Dorsolateral prefrontal cortex (tissue), 120 donors: ENCODE measurements at regions of chr2 and their contacts with region 1.

Region 1: DNA sequence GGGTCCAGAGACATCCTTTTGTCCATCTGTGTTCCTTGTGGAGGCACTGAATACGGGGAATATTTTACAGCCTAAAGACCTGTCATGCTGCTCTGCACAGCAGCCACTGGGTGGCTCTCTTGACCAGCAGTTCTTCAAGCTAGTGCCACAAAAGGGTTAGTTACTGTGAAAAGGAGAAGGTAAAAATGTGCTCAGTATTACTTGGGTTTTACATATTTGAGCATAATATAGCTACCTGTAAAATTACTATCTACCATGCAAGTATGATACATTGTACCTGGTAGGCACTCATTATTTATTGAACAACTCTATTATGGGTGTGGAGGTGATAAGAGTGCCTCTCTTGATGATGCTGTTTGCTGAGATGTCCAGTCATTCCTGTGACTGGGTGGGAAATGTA is 23.6 kb downstream of the FZD5 start:
- DNase-seq: peak in 9 of 10 donors; percentile 43 to 78 (median 68)
- H3K4me3 ChIP-seq: no peak overlapping the region
- H3K27ac ChIP-seq: no peak overlapping the region
- H3K27me3 ChIP-seq: no peaks in the 10 kb centered on the region
- CTCF ChIP-seq: peak; percentile 54 to 99 (median 92)

Region 2: DNA sequence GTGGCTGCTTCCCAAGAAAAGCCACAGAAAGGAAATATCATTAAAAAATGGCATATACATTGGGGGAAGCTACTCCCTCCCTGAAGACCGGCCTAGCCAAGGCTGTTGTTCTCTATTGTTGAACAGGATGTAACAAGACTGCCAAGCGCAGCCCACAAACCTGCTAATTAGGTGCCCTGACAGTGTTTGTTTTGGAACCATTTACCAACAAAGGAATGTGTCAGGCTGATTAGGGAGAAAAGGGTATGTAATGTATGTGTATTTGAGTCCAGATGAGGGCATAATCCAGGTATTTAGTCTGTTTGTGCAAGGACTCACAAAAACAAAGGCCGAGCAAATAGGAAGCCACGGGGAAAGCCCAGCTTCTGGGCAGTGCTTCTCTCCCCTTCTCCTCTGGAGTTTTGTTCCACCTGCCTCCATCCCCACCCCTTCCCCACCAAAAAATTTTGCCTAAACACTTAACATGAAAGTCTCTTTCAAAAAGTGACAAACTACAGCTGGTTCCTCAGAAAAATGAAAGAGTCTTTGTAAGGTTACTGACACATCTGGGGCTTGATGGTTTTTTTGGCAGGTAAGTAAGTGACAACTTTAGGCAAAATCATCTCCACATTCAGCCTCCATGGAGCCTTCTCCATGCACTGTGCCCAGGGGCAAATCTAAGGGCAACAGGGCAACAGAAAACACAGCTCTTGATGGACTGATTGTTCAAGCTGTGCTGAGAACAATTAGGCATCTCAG is 101.8 kb after region 1 on chr2:
- intact Hi-C with region 1: no loop called
- DNase-seq: no peak
- H3K4me3 ChIP-seq: no peak overlapping the region
- H3K27ac ChIP-seq: peak overlapping the region in 17 of 59 donors; percentile 1 to 76 (median 32)
- H3K27me3 ChIP-seq: no peaks in the 10 kb centered on the region
- CTCF ChIP-seq: no peak

Region 3: DNA sequence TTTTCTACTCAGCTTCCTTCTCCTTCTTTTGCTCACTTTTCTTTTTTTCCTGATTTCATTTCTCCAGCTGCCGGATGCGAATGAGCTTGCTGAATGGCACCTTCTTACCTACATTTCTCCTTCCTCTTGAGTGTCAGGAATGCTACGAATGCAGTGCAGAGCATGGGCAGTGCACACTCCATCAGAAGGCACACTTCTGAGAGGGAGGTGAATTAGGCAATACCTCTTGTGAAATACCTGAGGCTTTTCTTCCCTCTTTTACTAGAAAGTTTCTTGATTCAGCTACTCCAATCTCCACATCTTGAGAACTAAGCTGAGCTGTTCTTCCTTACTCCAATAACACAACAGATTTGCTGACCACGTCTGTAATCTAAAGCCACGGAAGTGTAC is 228.1 kb after region 1 on chr2:
- intact Hi-C with region 1: loop called in 1 of 2 experiments (anchors 2 kb)
- DNase-seq: no peak
- H3K4me3 ChIP-seq: no peak overlapping the region
- H3K27ac ChIP-seq: no peak overlapping the region
- H3K27me3 ChIP-seq: no peaks in the 10 kb centered on the region
- CTCF ChIP-seq: no peak

Region 4: DNA sequence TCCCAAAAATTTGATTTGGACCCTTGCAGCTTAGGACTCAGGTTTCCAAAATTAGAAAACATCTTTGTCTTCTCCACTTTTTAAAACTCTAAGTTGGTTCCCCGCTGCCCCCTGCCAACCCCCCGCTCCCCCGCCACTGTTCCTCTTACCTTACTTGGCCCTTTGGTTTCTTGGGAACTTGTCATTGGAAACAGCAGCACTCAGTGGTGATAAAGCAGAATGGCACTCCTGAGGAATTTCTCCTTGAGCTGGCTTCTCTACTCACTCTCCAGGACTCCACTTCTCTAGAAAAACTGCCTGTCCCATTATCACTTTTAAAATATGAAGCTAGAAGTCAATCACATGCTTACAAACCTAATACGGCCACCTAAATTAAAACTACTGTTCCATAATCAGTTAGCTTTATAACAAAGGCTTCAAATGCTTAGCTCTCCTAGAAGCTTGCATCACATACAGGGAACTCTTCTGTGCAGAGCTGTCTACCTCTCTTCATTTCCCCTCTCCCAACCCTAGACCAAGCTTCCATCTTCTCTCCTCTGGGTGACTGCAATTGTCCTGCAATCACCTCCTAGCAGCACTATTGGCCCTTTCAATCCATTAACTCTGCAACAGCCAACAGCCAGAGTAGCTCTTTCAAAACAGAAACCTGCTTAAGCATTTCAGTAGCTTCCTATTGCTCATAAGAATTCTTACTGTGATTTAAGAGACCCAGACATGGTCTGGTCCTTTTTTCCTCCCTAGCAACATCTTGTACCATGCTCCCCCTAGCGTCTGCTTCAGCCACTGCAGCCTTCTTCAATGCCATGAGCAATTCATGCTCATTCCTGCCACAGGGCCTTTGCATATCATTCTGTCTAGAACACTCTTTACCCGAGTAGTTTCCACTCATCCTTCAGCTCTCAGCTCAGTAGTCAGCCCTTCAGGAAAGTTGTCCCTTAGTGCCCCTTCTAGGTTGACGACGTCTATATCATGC is 294.4 kb after region 1 on chr2:
- intact Hi-C with region 1: loop called (anchors 2 to 10 kb)
- DNase-seq: peak in 8 of 10 donors; percentile 9 to 73 (median 55)
- H3K4me3 ChIP-seq: peak overlapping the region in 15 of 59 donors; percentile 3 to 45 (median 25)
- H3K27ac ChIP-seq: peak overlapping the region in 1 of 59 donors; percentile 15
- H3K27me3 ChIP-seq: no peaks in the 10 kb centered on the region
- CTCF ChIP-seq: peak; percentile 28 to 73 (median 62)

Region 5: GRCh38 chr2:208072250-208072892 is 326.2 kb after region 1 on chr2:
- intact Hi-C with region 1: loop called (anchors 2 to 5 kb)
- DNase-seq: peak in 9 of 10 donors; percentile 49 to 84 (median 68)
- H3K4me3 ChIP-seq: no peak overlapping the region
- H3K27ac ChIP-seq: no peak overlapping the region
- H3K27me3 ChIP-seq: no peaks in the 10 kb centered on the region
- CTCF ChIP-seq: peak; percentile 66 to 92 (median 80)

Region 6: DNA sequence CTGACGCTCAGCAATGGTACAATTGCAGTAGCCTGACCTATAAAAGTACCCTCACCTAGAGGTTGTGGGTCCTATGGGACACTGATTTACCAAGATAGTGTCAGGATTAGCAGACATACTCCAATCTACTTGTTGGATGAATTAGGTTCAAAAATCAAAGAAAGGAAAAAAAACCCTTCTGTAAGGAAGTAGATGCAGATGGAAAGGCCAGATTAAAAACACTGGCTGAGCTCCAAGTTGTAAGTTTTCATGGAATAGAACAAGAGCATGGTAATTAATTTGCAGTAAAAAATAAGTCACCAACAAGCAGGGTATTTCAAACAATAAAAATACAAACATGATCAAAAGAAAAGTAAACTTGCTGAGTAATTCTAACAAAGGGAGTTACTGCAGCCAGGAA is 482.3 kb after region 1 on chr2:
- intact Hi-C with region 1: no loop called
- DNase-seq: no peak
- H3K4me3 ChIP-seq: no peak overlapping the region
- H3K27ac ChIP-seq: no peak overlapping the region
- H3K27me3 ChIP-seq: no peaks in the 10 kb centered on the region
- CTCF ChIP-seq: no peak